Ovary (tissue), 10 donors: ENCODE measurements at regions of chr1 and their contacts with region 1.

Region 1: GRCh38 chr1:172697534-172698002 is 38.7 kb downstream of the FASLG start:
- DNase-seq: no peak
- H3K4me3 ChIP-seq: no peak overlapping the region
- H3K27ac ChIP-seq: no peak overlapping the region
- H3K4me1 ChIP-seq: no peaks in the 10 kb centered on the region
- H3K27me3 ChIP-seq: no peaks in the 10 kb centered on the region
- CTCF ChIP-seq: no peak
- EP300 ChIP-seq: no peak
- POLR2A ChIP-seq: no peak

Region 2: DNA sequence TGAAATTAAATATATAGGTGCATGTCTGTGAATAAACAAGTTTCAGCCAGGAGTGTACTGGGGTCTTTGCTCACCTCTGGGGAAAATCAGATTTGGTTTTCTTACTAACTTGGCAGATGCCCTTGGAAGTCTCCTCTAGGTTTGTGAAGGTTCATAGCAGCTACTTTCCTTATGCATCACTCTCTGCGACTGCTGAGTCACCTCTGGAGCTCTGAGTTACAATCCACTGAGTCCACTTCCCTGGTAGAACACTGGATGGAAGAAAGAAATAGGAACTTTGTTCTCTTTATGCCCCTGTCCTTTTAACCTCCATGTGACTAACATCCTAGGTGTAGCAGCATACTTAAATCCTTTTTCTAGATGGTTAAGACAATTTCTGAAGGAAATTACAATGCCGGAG is 43.0 kb before region 1 on chr1:
- intact Hi-C with region 1: loop called in 1 of 4 experiments (anchors 2 kb)
- DNase-seq: no peak
- H3K4me3 ChIP-seq: no peak overlapping the region
- H3K27ac ChIP-seq: no peak overlapping the region
- H3K4me1 ChIP-seq: no peaks in the 10 kb centered on the region
- H3K27me3 ChIP-seq: no peaks in the 10 kb centered on the region
- CTCF ChIP-seq: no peak
- EP300 ChIP-seq: no peak
- POLR2A ChIP-seq: no peak